ENCODE measurements at regions of chr10 and their contacts with region 1.

Region 1: DNA sequence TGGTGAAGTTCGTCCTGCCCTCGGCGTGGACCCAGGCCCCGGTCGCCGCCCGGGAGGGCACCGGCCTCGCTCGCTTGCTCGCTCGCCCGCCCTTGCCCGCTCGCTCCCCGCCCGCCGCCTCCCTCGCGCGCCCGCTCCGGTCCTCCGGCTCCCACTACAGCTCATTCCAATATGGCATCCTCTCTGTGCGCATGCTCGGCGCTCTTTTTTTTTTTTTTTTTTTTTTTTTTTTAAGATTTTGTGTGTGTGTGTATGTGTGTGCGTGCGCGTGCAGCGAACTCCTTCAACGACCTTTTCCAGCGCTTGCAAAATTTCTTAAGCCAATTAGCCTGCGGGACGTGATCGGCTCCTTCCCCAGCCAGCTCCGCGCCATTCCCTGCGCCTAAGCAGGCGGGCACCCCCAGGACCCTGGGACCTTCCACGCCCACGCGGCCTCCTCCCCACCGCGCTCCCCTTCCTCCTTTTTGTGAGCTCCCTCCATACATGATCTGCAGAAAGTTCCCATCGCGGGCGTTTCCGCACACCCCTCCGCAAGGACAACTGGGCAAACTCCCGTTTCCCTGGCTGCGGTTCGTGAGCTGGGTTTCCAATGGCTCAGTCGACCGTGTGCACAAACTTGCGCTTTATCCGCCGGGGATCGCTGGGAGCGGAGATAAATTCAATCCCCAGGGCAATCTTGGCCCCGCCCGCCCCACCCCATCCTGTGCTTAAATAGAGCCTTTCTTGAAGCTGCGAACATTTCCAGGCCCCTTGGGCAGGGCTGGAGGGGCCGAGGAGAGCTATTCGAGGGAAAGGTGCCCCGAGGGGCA is at the start of gene SFMBT2:
- DNase-seq: peak; percentile 90
- H3K4me3 Mint-ChIP-seq: peak within 1 kb of the TSS; percentile 95
- H3K27ac Mint-ChIP-seq: peak within 1 kb of the TSS; percentile 97
- H3K4me1 Mint-ChIP-seq: peaks cover 23% of the 10 kb centered on the region
- H3K27me3 Mint-ChIP-seq: peaks cover 30% of the 10 kb centered on the region
- total RNA-seq, gene SFMBT2: 24.9 TPM in 2 replicates

Region 2: DNA sequence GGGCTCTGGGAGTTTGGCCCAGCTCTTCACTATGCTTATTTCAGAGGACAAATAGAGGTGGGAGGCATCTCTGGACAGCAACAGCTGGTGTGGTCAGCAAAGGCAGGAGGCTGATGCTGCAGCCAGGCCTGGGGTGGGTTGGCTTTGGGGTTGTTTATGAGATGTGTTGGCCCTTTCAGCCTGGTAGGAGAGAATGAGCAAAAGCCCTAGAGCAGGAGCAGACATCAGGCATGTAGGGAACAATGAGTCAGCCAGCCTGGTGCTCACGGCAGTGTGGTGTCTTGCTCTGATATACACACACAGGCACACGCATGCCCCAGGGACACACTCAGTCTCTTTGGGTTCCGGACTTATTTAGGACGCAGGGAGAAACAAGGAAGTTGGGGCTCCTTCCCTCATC is 988.1 kb before region 1 on chr10:
- intact Hi-C with region 1: loop called (anchors 10 kb)
- DNase-seq: no peak
- H3K4me3 Mint-ChIP-seq: peak overlapping the region; percentile 15
- H3K27ac Mint-ChIP-seq: peak overlapping the region; percentile 91
- H3K4me1 Mint-ChIP-seq: peaks cover 23% of the 10 kb centered on the region
- H3K27me3 Mint-ChIP-seq: no peaks in the 10 kb centered on the region

Region 3: DNA sequence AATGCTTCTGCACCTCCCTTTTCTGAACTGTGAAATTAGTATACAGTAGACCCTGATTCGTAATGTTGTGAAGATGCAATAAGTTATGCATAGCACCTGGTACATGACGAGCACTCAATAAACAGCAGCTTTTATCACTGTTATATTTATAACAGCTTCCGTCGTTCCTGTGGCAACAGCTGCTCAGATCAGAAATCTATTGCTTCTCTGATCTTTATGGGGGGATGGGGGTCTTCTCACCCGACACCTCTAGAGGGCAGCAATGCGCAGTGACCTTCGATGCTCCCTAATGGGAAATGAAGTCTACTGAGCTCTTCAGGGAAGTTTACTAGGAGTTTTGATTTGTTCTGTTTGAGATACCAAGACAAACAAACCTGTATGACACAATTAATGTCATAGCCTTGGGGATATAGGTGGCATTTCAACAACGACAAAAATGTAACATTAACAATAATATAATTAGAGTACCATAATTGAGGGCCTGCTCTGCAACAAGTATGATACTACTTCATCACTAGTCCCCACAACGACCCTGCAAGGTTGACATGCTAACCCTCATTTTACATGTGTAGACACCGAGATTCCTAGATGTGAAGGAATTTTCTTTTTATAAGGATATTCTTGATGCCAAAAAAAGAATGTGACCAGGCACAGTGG is 289.8 kb before region 1 on chr10:
- intact Hi-C with region 1: loop called (anchors 1 kb)
- DNase-seq: peak; percentile 90
- H3K4me3 Mint-ChIP-seq: no peak overlapping the region
- H3K27ac Mint-ChIP-seq: no peak overlapping the region
- H3K4me1 Mint-ChIP-seq: peaks cover 4% of the 10 kb centered on the region
- H3K27me3 Mint-ChIP-seq: peaks cover 44% of the 10 kb centered on the region

Region 4: GRCh38 chr10:7192831-7193361 is 218.2 kb before region 1 on chr10:
- intact Hi-C with region 1: loop called (anchors 1 kb)
- DNase-seq: peak; percentile 93
- H3K4me3 Mint-ChIP-seq: peak overlapping the region; percentile 80
- H3K27ac Mint-ChIP-seq: peak overlapping the region; percentile 95
- H3K4me1 Mint-ChIP-seq: peaks cover 59% of the 10 kb centered on the region
- H3K27me3 Mint-ChIP-seq: no peaks in the 10 kb centered on the region

Region 5: GRCh38 chr10:7260412-7260900 is 150.6 kb before region 1 on chr10:
- intact Hi-C with region 1: loop called (anchors 2 kb)
- DNase-seq: peak; percentile 71
- H3K4me3 Mint-ChIP-seq: peak overlapping the region; percentile 31
- H3K27ac Mint-ChIP-seq: peak overlapping the region; percentile 65
- H3K4me1 Mint-ChIP-seq: peaks cover 57% of the 10 kb centered on the region
- H3K27me3 Mint-ChIP-seq: no peaks in the 10 kb centered on the region

Region 6: DNA sequence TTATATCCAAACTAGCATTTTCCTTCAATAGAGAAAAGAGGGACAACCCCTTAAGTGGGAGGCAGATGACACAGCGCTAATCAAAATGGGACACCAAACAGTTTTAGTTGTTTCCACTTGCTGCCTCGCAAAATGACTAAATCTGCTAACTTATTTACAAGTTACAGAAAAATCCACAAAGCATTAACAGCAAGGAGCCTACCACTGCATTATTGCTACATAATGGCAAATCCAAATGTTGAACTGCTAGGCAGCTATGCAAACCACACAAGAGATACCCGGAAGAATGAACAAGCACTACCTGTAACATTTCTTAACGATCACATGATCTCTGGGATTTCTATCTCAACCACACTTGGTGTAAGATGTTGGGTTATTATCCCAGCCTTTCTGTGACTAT is 96.9 kb before region 1 on chr10:
- intact Hi-C with region 1: loop called (anchors 2 kb)
- DNase-seq: no peak
- H3K4me3 Mint-ChIP-seq: peak overlapping the region; percentile 47
- H3K27ac Mint-ChIP-seq: peak overlapping the region; percentile 84
- H3K4me1 Mint-ChIP-seq: peaks cover 50% of the 10 kb centered on the region
- H3K27me3 Mint-ChIP-seq: no peaks in the 10 kb centered on the region

Measured in activated CD4-positive, alpha-beta T cell treated with anti-CD3 and anti-CD28 coated beads, Interleukin-2, amount 10 ng/mL, durations not matched to agents 24 days and 14 days (primary cell).